ENCODE measurements at regions of chr5 and their contacts with region 1.

Region 1: GRCh38 chr5:139560752-139561654 is at the start of gene UBE2D2:
- DNase-seq: peak; percentile 99
- H3K4me3 ChIP-seq: peak within 1 kb of the TSS; percentile 82
- H3K27ac ChIP-seq: peak within 1 kb of the TSS; percentile 92
- H3K4me1 ChIP-seq: peaks cover 34% of the 10 kb centered on the region
- CTCF ChIP-seq: no peak
- total RNA-seq, gene UBE2D2: 102 and 145 TPM in 2 replicates

Region 2: GRCh38 chr5:139167952-139168730 is 392.9 kb before region 1 on chr5:
- CTCF ChIA-PET with region 1: no interaction called
- POLR2A ChIA-PET with region 1: no interaction called
- intact Hi-C with region 1: no loop called
- DNase-seq: no peak
- H3K4me3 ChIP-seq: no peak overlapping the region
- H3K27ac ChIP-seq: no peak overlapping the region
- H3K4me1 ChIP-seq: no peaks in the 10 kb centered on the region
- CTCF ChIP-seq: no peak

Region 3: GRCh38 chr5:139293504-139294373 is 267.3 kb before region 1 on chr5 and contains the start of gene MATR3:
- CTCF ChIA-PET with region 1: no interaction called
- POLR2A ChIA-PET with region 1: interaction called, 3 read pairs
- intact Hi-C with region 1: loop called (anchors 10 kb)
- DNase-seq: peak; percentile 95
- H3K4me3 ChIP-seq: peak within 1 kb of the TSS; percentile 97
- H3K27ac ChIP-seq: peak within 1 kb of the TSS; percentile 84
- H3K4me1 ChIP-seq: peaks cover 42% of the 10 kb centered on the region
- CTCF ChIP-seq: no peak
- total RNA-seq, gene MATR3: 205 and 276 TPM in 2 replicates

Region 4: GRCh38 chr5:139517683-139518564 is 43.1 kb before region 1 on chr5:
- CTCF ChIA-PET with region 1: interaction called, 3 read pairs
- POLR2A ChIA-PET with region 1: no interaction called
- intact Hi-C with region 1: loop called (anchors 1 kb)
- DNase-seq: peak; percentile 90
- H3K4me3 ChIP-seq: peak overlapping the region; percentile 60
- H3K27ac ChIP-seq: no peak overlapping the region
- H3K4me1 ChIP-seq: peaks cover 30% of the 10 kb centered on the region
- CTCF ChIP-seq: peak; percentile 94

Region 5: DNA sequence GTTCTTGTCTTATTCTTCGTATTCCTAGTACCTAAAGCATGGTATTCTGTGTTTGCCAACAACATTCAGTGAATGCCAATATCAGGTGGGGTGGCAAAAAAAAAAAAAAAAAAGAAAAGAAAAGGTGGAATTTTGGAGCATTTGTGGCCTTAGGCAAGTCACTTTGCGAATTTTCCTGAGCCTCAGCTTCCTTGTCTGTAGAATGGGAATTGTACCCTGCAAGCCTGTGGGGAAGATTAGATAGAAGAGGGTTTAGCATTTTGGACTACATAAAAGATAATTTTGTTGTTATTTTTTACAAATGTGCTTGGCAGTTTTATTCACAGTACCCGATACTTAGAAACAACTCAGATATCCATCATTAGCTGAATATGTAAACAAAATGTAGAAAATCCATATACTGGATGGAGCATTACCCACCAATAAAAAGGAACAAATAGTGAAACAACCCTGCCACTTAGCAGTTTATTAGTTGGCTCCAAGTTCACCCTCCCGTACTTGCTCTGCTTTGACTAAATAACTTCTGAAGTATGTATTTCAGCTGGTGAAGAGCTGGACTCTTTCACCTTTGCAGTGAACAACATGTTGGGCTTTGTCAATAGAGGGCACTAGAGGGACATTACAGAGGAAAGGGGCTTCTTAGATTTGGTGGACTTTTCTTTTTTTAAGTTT is 13.8 kb after region 1 on chr5:
- CTCF ChIA-PET with region 1: interaction called, 4 read pairs
- POLR2A ChIA-PET with region 1: interaction called, 15 read pairs
- intact Hi-C with region 1: loop called (anchors 1 kb)
- DNase-seq: peak; percentile 79
- H3K4me3 ChIP-seq: peak overlapping the region; percentile 0
- H3K27ac ChIP-seq: peak overlapping the region; percentile 72
- H3K4me1 ChIP-seq: peaks cover 77% of the 10 kb centered on the region
- CTCF ChIP-seq: peak; percentile 94

Region 6: GRCh38 chr5:139670369-139671095 is 109.5 kb after region 1 on chr5:
- CTCF ChIA-PET with region 1: interaction called, 5 read pairs
- POLR2A ChIA-PET with region 1: interaction called, 3 read pairs
- intact Hi-C with region 1: loop called (anchors 1 kb)
- DNase-seq: peak; percentile 98
- H3K4me3 ChIP-seq: peak overlapping the region; percentile 74
- H3K27ac ChIP-seq: peak overlapping the region; percentile 99
- H3K4me1 ChIP-seq: peaks cover 89% of the 10 kb centered on the region
- CTCF ChIP-seq: peak; percentile 82

Region 7: DNA sequence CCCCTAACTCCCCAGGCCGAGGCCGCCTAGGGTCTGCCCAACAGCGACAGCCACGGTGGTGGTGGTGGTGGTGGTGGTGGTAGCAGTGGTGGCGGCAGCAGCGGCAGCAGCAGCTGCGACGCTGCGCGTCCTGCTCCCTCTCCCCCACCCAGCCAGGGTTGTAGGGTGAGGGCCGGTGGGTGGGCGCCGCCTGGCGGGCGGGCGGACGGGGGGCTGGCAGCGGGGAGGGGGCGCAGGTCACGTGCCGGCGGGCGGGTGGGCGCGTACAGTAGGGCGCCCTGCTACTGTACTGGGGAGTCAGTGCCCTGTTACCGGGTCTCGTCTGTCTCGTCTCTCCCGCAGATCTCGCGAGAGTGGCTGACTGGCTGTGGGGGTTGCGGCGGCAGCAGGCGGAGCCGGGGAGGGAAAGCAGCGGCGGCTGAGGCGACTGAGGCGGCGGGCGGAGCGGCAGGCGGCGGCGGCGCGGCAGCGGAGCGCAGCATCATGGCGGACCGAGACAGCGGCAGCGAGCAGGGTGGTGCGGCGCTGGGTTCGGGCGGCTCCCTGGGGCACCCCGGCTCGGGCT is 552.8 kb after region 1 on chr5 and contains the start of gene PURA:
- CTCF ChIA-PET with region 1: no interaction called
- POLR2A ChIA-PET with region 1: no interaction called
- intact Hi-C with region 1: loop called (anchors 10 kb)
- DNase-seq: peak; percentile 97
- H3K4me3 ChIP-seq: peak within 1 kb of the TSS; percentile 86
- H3K27ac ChIP-seq: peak within 1 kb of the TSS; percentile 68
- H3K4me1 ChIP-seq: peaks cover 74% of the 10 kb centered on the region
- CTCF ChIP-seq: peak; percentile 68
- total RNA-seq, gene PURA: 19.3 and 19.7 TPM in 2 replicates

Measured in OCI-LY7 (cell line).